ENCODE measurements at regions of chr11 and their contacts with region 1.

Region 1: DNA sequence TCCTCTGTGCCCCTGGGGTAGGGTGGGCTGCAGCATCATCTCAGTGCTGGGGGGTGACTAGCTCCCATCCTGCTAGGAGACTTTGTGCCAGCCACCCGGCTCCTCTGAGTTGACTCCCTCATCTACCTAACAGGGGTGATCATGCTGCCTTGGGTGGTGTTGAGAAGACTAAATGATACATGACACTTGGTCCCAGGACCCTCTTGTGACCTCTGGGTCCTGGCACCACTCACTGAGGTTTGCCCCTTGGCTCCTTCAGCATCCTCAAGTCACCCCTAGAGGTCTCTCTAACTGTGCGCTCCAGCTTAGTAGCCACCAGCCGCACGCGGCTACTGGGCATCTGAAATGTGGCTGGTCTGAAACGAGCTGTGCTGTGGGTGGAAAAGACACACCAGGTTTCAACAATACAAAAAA is 72.1 kb downstream of the LRRC32 start:
- DNase-seq: peak; percentile 47
- ATAC-seq: peak; percentile 85
- H3K4me3 Mint-ChIP-seq: no peak overlapping the region
- H3K27ac Mint-ChIP-seq: no peak overlapping the region
- H3K4me1 Mint-ChIP-seq: 0 out of 2 replicates have a peak, but pooled peaks cover 7% of the 10 kb centered on the region
- H3K27me3 Mint-ChIP-seq: no peaks in the 10 kb centered on the region
- CTCF ChIP-seq: 0 out of 2 replicates have a peak, but pooled peaks have one; percentile 10

Region 2: DNA sequence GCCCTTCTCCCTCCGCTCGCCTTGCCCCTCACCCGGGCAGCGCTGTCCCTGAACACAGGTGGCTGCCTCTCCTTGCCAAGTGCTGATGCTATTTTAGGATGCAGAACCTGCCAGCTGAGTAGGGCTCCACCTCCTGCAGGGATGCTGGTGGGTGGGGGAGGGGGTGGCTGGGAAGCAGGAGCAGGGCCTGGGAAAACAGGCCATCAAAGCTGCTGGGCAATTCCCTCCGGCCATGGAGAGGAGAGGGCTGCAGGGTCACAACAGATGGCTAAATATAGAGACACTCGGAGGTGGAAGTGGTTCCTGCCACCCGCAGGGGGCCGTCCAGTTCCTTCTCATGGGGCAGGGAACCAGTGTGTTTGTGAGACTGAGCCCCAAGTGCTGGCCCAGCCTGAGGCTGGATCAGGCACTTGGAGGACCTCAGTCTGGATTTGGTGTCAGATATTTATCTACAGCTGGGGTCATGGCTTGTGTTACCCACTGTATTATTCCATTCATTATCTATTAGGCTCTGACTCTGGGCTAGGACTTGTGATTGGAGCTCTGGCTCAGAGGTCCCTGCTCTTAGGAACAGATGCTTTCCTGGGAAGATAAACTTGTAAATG is 12.5 kb after region 1 on chr11:
- CTCF ChIA-PET with region 1: interaction called, 13 read pairs
- POLR2A ChIA-PET with region 1: no interaction called
- DNase-seq: no peak
- ATAC-seq: no peak
- H3K4me3 Mint-ChIP-seq: no peak overlapping the region
- H3K27ac Mint-ChIP-seq: no peak overlapping the region
- H3K4me1 Mint-ChIP-seq: peaks cover 27% of the 10 kb centered on the region
- H3K27me3 Mint-ChIP-seq: peaks cover 2% of the 10 kb centered on the region; the same call in 1 of the 2 replicates
- CTCF ChIP-seq: no peak

Region 3: GRCh38 chr11:76623171-76623883 is 24.9 kb after region 1 on chr11:
- CTCF ChIA-PET with region 1: no interaction called
- POLR2A ChIA-PET with region 1: no interaction called
- DNase-seq: no peak
- ATAC-seq: no peak
- H3K4me3 Mint-ChIP-seq: no peak overlapping the region
- H3K27ac Mint-ChIP-seq: no peak overlapping the region
- H3K4me1 Mint-ChIP-seq: 0 out of 2 replicates have a peak, but pooled peaks cover 4% of the 10 kb centered on the region
- H3K27me3 Mint-ChIP-seq: peaks cover 4% of the 10 kb centered on the region; the same call in 1 of the 2 replicates
- CTCF ChIP-seq: no peak

Region 4: GRCh38 chr11:76670485-76671236 is 72.2 kb after region 1 on chr11 and contains the start of gene LRRC32:
- CTCF ChIA-PET with region 1: interaction called, 60 read pairs
- POLR2A ChIA-PET with region 1: no interaction called
- DNase-seq: peak; percentile 57
- ATAC-seq: peak; percentile 31
- H3K4me3 Mint-ChIP-seq: peak within 1 kb of the TSS; percentile 66
- H3K27ac Mint-ChIP-seq: no peak within 1 kb of the TSS
- H3K4me1 Mint-ChIP-seq: peaks cover 22% of the 10 kb centered on the region
- H3K27me3 Mint-ChIP-seq: peaks cover 22% of the 10 kb centered on the region
- CTCF ChIP-seq: no peak
- total RNA-seq, gene LRRC32: 0.74 to 1.7 TPM (median 1.6 TPM) in 3 replicates

Region 5: GRCh38 chr11:76686261-76687079 is 88.0 kb after region 1 on chr11:
- CTCF ChIA-PET with region 1: interaction called, 14 read pairs
- POLR2A ChIA-PET with region 1: no interaction called
- DNase-seq: no peak
- ATAC-seq: peak; percentile 88
- H3K4me3 Mint-ChIP-seq: no peak overlapping the region
- H3K27ac Mint-ChIP-seq: no peak overlapping the region
- H3K4me1 Mint-ChIP-seq: peaks cover 11% of the 10 kb centered on the region
- H3K27me3 Mint-ChIP-seq: peaks cover 3% of the 10 kb centered on the region; the same call in 1 of the 2 replicates
- CTCF ChIP-seq: no peak

Region 6: GRCh38 chr11:76978818-76979217 is 380.4 kb after region 1 on chr11:
- CTCF ChIA-PET with region 1: no interaction called
- POLR2A ChIA-PET with region 1: no interaction called
- DNase-seq: no peak
- ATAC-seq: no peak
- H3K4me3 Mint-ChIP-seq: no peak overlapping the region
- H3K27ac Mint-ChIP-seq: no peak overlapping the region
- H3K4me1 Mint-ChIP-seq: no peaks in the 10 kb centered on the region
- H3K27me3 Mint-ChIP-seq: no peaks in the 10 kb centered on the region
- CTCF ChIP-seq: no peak